Natural killer cell (primary cell): ENCODE measurements at regions of chr12 and their contacts with region 1.

Region 1: DNA sequence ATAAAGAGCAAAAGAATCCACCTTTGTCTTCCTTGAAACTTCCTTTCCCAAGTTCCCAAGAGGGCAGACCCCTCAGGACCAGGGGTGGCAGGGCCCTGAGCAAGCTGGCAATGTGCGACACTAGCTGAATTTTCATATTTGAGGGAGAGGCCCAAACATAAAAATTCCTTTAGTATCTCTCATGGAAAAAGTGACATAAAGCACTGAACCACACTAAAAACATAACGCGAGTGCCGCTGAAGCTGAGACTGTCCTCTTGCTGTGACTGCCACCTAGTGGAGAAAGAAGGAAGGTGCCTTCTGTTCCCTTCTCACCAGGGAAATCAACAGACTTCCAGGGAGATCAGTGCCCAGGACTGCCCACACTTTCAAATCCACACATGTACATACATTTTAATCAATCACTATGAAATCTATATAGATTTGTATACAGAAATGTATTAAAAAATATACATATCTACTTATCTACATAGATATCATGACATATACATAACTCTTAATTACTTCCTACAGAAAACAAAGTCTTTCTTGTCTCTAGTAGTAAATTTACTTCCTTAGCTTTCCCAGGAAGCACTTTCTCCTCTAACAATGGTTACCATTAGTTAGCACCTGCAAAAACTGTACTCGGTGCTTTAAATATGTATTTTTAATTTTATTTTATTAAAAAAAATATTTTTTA is 53.8 kb downstream of the SSH1 start:
- DNase-seq: peak; percentile 44 to 89
- ATAC-seq: peak; percentile 87 to 98 (median 93)
- H3K4me3 ChIP-seq: no peak overlapping the region
- H3K4me3 Mint-ChIP-seq: no peak overlapping the region
- H3K27ac ChIP-seq: no peak overlapping the region
- H3K27ac Mint-ChIP-seq: no peak overlapping the region
- H3K4me1 ChIP-seq: peaks cover 3% of the 10 kb centered on the region
- H3K4me1 Mint-ChIP-seq: no peaks in the 10 kb centered on the region
- H3K27me3 ChIP-seq: no peaks in the 10 kb centered on the region
- H3K27me3 Mint-ChIP-seq: no peaks in the 10 kb centered on the region
- CTCF ChIP-seq: peak; percentile 97

Region 2: DNA sequence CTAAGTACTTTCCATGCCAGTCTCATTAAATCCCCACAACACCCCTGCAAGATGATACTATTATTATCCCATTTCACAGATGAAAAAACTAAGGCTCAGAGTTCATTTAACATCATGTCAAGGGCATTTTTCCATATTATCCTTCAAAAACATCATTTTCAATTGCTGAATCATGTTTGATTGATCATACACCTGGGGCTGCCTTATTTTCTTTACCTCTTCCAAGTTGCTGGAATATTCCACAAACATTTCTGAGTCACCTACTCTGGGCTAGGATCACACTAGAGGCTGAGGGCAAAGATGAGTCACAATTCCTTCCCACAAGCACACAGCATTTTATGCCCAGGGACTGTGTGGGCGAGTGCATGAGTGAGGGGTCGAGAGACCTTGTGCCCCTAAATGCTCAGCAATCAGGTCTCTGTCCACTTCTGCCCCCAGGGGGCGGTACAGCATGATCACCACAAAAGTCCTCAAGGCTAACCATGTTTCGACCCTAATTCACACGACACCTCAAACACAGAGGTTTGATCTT is 191.6 kb before region 1 on chr12:
- intact Hi-C with region 1: loop called (anchors 1 kb)
- DNase-seq: peak; percentile 66 to 80
- ATAC-seq: peak; percentile 67 to 72 (median 68)
- H3K4me3 ChIP-seq: no peak overlapping the region
- H3K4me3 Mint-ChIP-seq: no peak overlapping the region
- H3K27ac ChIP-seq: no peak overlapping the region
- H3K27ac Mint-ChIP-seq: peak overlapping the region in 1 of 2 donors; percentile 70
- H3K4me1 ChIP-seq: peaks cover 14% of the 10 kb centered on the region
- H3K4me1 Mint-ChIP-seq: peaks cover 23 to 24% of the 10 kb centered on the region in 2 donors
- H3K27me3 ChIP-seq: no peaks in the 10 kb centered on the region
- H3K27me3 Mint-ChIP-seq: peaks cover 0 to 6% of the 10 kb centered on the region in 2 donors
- CTCF ChIP-seq: peak; percentile 69

Region 3: DNA sequence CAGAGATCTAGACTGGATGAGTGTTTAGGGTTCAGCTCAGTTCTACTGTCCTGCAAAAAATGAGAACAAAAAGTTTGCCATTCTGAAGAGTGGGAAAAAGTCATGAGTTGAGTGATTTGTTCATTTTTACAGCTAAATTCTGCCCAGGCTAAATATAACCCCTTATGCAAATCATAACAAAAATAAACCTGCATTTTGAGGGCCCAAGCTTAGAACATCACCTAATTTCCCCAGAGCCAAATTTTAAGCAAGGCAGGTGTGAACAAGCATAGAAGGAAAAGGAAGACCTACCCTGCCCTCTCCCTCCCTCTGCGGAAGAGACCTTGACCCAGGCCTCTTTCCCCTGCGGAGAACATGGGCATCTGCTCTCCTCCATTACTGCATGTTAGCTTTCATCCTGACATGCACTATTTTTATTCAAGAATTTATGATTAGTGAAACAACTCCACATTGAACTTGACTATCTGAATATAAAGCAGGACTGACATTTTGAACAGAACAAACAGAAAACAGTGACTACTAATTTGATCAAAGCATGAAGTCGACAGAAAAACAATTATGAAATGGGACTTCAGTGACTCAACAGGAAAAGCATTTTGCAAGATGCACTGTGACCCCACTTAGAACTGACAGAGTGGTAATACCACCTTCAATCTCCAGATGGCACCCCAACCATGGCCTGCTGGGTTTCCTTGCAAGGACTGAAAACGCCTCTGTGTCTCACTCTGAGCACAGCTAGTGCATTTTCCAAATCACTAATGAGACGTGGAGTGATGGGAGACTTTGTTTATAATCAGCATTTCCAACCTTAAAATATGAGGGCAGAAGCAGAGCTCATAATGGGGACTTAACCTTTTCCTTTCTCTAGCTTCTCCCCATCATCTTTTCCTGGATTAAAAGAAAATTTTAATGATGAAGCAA is 139.0 kb before region 1 on chr12:
- intact Hi-C with region 1: loop called (anchors 1 kb)
- DNase-seq: peak; percentile 65 to 90
- ATAC-seq: peak; percentile 99 to 100 (median 100)
- H3K4me3 ChIP-seq: no peak overlapping the region
- H3K4me3 Mint-ChIP-seq: no peak overlapping the region
- H3K27ac ChIP-seq: peak overlapping the region; percentile 14
- H3K27ac Mint-ChIP-seq: peak overlapping the region; percentile 63 to 88
- H3K4me1 ChIP-seq: peaks cover 6% of the 10 kb centered on the region
- H3K4me1 Mint-ChIP-seq: peaks cover 5 to 12% of the 10 kb centered on the region in 2 donors
- H3K27me3 ChIP-seq: no peaks in the 10 kb centered on the region
- H3K27me3 Mint-ChIP-seq: no peaks in the 10 kb centered on the region
- CTCF ChIP-seq: peak; percentile 84

Region 4: GRCh38 chr12:108950991-108951739 is 147.6 kb after region 1 on chr12:
- intact Hi-C with region 1: loop called (anchors 2 kb)
- DNase-seq: peak; percentile 61 to 86
- ATAC-seq: peak; percentile 75 to 89 (median 84)
- H3K4me3 ChIP-seq: no peak overlapping the region
- H3K4me3 Mint-ChIP-seq: no peak overlapping the region
- H3K27ac ChIP-seq: no peak overlapping the region
- H3K27ac Mint-ChIP-seq: no peak overlapping the region
- H3K4me1 ChIP-seq: peaks cover 5% of the 10 kb centered on the region
- H3K4me1 Mint-ChIP-seq: peaks cover 0 to 5% of the 10 kb centered on the region in 2 donors
- H3K27me3 ChIP-seq: no peaks in the 10 kb centered on the region
- H3K27me3 Mint-ChIP-seq: peaks cover 7 to 11% of the 10 kb centered on the region in 2 donors
- CTCF ChIP-seq: peak; percentile 92

Region 5: DNA sequence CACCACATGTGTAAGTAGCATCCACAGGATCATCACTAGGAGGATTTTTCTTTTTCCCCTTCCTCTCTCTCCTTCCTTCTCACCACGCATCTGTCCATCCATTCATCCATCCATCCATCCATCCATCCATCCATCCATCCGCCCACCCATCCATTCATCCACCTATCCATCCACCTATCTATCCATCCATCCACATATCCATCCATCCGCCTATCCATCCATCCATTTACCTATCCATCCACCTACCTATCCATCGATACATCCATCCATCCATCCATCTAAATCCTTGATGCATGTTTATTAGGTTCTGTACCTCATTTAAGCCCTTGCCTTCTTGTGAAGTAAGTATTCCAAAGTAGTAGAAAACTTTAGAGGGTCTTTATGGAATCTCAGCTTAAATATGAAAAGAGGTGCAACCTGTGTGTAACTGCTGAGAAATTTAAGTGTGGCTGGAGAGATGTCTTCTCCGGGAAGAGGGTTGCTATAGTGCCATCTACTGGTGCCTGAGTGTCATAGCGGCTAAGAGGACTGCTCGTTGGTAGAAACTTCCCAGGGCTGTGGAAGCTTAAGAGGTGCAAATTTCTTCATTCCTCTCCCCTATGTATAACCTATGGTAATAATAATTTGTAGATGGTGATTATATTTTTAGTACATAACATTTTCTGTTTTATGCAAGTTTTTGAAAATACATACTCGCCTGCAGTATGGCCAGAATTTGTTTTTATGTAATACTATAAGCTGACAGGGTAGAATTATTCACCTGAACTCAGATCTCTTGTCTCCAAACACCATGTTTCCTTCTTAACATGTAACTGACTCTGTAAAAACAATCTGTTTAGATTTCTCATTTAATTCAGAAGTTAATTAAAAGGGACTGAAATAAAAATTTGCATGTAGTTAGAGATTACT is 590.1 kb after region 1 on chr12:
- intact Hi-C with region 1: no loop called
- DNase-seq: peak in 1 of 2 donors; percentile 73
- ATAC-seq: peak; percentile 77 to 90 (median 84)
- H3K4me3 ChIP-seq: no peak overlapping the region
- H3K4me3 Mint-ChIP-seq: no peak overlapping the region
- H3K27ac ChIP-seq: no peak overlapping the region
- H3K27ac Mint-ChIP-seq: no peak overlapping the region
- H3K4me1 ChIP-seq: no peaks in the 10 kb centered on the region
- H3K4me1 Mint-ChIP-seq: peaks cover 0 to 5% of the 10 kb centered on the region in 2 donors
- H3K27me3 ChIP-seq: no peaks in the 10 kb centered on the region
- H3K27me3 Mint-ChIP-seq: peaks cover 25 to 31% of the 10 kb centered on the region in 2 donors
- CTCF ChIP-seq: peak; percentile 88